PC-9 (cell line): ENCODE measurements at regions of chr11 and their contacts with region 1.

Region 1: DNA sequence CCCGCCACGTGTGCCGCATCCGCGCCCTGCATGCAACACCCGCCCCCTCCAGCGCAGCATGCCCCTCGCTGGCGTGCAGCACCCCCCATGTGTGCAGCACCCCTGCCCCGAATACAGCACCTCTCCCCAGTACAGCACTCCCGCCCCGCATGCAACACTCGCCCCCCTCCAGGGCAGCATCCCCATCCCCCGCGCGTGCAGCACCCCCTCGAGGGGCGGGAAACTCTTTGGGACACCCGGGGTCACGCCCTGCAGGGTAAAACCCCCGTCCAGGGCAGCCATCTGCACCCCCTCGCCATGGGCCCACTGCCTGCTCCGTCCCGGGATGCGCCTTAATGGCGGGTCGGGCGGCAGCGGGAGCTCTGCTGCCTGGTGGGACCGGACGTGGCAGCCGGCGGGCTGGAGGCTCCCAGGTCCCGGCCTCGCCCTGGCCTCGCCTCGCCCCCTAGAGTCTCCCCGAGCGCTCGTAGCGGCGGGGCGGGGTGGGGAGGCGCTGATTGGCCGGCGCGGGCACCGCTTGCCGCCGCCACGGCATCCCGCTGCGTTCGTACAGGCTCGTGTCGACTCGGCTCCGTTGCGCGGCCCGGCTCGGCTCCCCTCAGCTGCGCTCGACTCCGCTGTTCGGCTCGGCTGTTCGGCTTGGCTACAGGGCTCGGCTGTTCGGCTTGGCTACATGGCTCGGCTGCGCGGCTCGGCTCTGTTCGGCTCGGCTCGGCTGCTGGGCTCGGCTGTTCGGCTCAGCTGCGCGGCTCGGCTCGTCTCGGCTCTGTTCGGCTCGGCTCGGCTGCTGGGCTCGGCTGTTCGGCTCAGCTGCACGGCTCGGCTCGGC is 417 bp upstream of the BRSK2 start:
- DNase-seq: peak; percentile 68 to 94
- H3K4me3 ChIP-seq: peak overlapping the region; percentile 26; the same call in 1 of the 2 replicates
- H3K27ac ChIP-seq: no peak overlapping the region
- H3K4me1 ChIP-seq: no peaks in the 10 kb centered on the region
- H3K27me3 ChIP-seq: no peaks in the 10 kb centered on the region
- CTCF ChIP-seq: no peak

Region 2: GRCh38 chr11:1041936-1042608 is 347.2 kb before region 1 on chr11:
- CTCF ChIA-PET with region 1: no interaction called
- POLR2A ChIA-PET with region 1: no interaction called
- intact Hi-C with region 1: no loop called
- DNase-seq: peak; percentile 49
- H3K4me3 ChIP-seq: peak overlapping the region; percentile 18; the same call in 1 of the 2 replicates
- H3K27ac ChIP-seq: peak overlapping the region; percentile 59; the same call in 1 of the 2 replicates
- H3K4me1 ChIP-seq: peaks cover 34% of the 10 kb centered on the region
- H3K27me3 ChIP-seq: no peaks in the 10 kb centered on the region
- CTCF ChIP-seq: no peak

Region 3: GRCh38 chr11:1309498-1310317 is 79.6 kb before region 1 on chr11 and contains the start of gene TOLLIP:
- CTCF ChIA-PET with region 1: no interaction called
- POLR2A ChIA-PET with region 1: no interaction called
- intact Hi-C with region 1: loop called (anchors 5 kb)
- DNase-seq: peak; percentile 66 to 95
- H3K4me3 ChIP-seq: peak within 1 kb of the TSS; percentile 84
- H3K27ac ChIP-seq: peak within 1 kb of the TSS; percentile 74
- H3K4me1 ChIP-seq: peaks cover 7% of the 10 kb centered on the region; the same call in 1 of the 2 replicates
- H3K27me3 ChIP-seq: no peaks in the 10 kb centered on the region
- CTCF ChIP-seq: no peak
- total RNA-seq, gene TOLLIP: 29.5 and 35.8 TPM in 2 replicates

Region 4: DNA sequence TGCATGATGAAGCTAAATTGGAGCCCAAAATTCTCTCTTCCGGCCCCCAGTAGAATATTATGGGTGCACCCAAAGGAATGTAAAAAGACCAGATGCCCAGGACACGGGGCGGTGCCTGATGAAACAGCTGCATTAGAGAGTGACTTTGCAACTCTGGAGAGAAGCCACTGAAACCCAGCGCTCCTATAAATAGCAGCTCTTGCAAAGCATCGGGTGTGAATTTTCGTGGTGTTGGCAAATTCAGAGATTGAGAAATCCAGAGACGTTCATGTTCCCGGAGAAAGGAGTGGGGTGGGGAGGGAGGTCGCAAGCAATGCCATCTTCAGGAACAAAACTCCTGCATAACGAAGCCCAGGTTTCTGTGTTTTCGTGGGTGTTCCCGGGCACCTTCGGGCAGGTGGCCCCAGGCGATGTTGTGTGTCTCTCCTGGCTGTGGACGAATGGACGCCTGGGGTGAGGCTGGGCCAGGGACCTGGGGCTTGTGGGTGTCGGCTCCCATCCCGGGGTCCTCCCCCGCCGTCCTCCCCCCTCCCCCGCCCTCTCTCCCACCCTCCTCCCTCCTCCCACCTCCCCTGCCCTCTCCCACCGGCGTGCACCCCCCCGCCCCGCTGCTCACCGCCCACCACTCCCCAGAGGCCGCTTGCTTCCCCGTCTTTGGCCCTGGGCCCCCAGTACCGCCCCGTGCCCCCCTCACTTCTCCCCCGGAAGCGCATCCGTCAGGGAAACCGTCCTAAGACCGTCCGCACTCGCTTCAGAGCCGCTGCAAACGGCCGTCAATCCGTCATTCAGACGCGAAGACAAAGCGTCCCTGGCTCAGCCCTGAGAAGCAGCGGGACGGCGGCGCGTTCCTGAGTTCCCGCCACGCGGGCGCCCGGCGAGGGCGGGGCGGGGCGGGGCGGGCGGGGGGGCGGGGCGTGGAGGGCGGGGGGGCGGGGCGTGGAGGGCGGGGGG is 53.2 kb before region 1 on chr11:
- CTCF ChIA-PET with region 1: no interaction called
- POLR2A ChIA-PET with region 1: no interaction called
- intact Hi-C with region 1: loop called (anchors 5 kb)
- DNase-seq: peak; percentile 44 to 72
- H3K4me3 ChIP-seq: peak overlapping the region; percentile 55; the same call in 1 of the 2 replicates
- H3K27ac ChIP-seq: no peak overlapping the region; the same call in 1 of the 2 replicates
- H3K4me1 ChIP-seq: peaks cover 9% of the 10 kb centered on the region
- H3K27me3 ChIP-seq: no peaks in the 10 kb centered on the region
- CTCF ChIP-seq: no peak

Region 5: DNA sequence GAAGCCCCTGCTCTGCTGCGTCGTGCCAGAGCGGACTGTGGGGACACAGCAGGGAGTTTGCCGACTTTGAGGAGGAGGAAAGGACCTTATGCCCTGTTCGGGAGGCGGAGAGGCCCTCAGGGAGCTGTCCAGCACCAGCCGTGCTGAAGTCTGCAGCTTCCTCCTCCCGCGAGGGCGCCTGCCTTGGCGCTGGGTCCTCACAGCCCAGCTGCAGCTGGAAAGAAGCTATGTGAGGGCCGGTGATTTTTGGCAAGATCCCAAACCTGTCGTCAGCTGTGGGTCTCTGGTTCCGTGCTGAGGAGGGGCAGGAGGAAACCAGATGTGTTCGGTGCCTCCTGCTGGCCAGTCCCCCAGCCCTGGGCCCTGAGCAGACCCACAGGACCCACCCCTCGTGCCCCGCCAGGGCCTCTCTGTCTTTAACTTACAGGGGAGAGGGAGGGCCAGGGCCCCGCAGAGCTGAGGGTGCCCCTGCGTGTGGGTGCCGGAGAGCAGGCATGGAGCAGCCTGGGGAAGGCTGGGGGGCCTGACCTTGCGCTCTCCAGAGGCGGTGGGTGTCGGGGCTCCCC is 12.4 kb after region 1 on chr11:
- CTCF ChIA-PET with region 1: no interaction called
- POLR2A ChIA-PET with region 1: no interaction called
- intact Hi-C with region 1: no loop called
- DNase-seq: peak; percentile 47 to 59
- H3K4me3 ChIP-seq: no peak overlapping the region
- H3K27ac ChIP-seq: no peak overlapping the region
- H3K4me1 ChIP-seq: no peaks in the 10 kb centered on the region
- H3K27me3 ChIP-seq: peaks cover 29% of the 10 kb centered on the region
- CTCF ChIP-seq: no peak

Region 6: DNA sequence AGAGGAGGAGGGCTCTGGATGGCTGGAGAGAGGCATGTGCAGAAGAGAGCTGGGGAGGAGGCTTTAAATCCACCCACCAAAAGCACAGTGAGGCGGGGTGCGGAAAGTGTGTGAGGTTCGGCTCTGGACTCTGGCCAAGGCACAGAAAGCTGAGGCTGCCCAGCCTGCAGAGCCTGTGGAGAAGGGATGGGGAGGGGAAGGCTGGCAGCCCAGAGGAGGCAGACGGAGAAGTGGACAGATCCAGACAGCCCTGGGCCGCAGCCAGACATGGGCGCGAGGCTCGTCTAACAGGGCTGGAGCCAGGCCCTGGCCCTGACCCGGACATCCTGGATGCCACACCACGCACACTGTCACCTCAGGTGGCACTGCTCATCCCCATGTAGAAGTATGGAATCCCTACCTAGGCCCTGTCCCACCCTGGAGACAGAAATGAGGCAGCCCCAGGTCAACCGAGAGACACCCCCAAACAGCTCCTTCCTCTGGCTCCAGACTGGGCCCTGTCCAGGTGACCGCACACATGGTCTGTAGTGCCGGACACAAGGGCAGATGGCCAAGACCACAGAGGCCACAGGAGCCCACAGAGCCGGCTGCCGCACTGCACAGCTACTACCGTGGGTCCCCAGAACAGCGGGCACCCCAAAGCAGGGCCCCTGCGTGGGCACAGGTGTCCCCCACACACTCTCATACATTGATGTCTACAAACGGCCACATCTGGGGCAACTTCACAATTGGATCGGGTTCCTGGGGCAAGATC is 113.8 kb after region 1 on chr11:
- CTCF ChIA-PET with region 1: no interaction called
- POLR2A ChIA-PET with region 1: no interaction called
- intact Hi-C with region 1: no loop called
- DNase-seq: no peak
- H3K4me3 ChIP-seq: no peak overlapping the region
- H3K27ac ChIP-seq: no peak overlapping the region
- H3K4me1 ChIP-seq: no peaks in the 10 kb centered on the region
- H3K27me3 ChIP-seq: no peaks in the 10 kb centered on the region
- CTCF ChIP-seq: no peak